Dendritic cell treated with granulocyte-macrophage colony-stimulating factor and Interleukin-4, amounts not matched to agents 40 ng/mL and 50 ng/mL, for 4 days (primary cell): ENCODE measurements at regions of chr13 and their contacts with region 1.

Region 1: DNA sequence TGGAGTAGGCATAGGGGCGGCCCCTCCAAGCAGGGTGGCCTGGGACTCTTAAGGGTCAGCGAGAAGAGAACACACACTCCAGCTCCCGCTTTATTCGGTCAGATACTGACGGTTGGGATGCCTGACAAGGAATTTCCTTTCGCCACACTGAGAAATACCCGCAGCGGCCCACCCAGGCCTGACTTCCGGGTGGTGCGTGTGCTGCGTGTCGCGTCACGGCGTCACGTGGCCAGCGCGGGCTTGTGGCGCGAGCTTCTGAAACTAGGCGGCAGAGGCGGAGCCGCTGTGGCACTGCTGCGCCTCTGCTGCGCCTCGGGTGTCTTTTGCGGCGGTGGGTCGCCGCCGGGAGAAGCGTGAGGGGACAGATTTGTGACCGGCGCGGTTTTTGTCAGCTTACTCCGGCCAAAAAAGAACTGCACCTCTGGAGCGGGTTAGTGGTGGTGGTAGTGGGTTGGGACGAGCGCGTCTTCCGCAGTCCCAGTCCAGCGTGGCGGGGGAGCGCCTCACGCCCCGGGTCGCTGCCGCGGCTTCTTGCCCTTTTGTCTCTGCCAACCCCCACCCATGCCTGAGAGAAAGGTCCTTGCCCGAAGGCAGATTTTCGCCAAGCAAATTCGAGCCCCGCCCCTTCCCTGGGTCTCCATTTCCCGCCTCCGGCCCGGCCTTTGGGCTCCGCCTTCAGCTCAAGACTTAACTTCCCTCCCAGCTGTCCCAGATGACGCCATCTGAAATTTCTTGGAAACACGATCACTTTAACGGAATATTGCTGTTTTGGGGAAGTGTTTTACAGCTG is at the starts of genes BRCA2 and ZAR1L:
- H3K4me3 Mint-ChIP-seq: peak within 1 kb of the TSS; percentile 95
- H3K27ac Mint-ChIP-seq: peak within 1 kb of the TSS; percentile 100
- H3K4me1 Mint-ChIP-seq: peaks cover 19% of the 10 kb centered on the region
- H3K27me3 Mint-ChIP-seq: no peaks in the 10 kb centered on the region

Region 2: DNA sequence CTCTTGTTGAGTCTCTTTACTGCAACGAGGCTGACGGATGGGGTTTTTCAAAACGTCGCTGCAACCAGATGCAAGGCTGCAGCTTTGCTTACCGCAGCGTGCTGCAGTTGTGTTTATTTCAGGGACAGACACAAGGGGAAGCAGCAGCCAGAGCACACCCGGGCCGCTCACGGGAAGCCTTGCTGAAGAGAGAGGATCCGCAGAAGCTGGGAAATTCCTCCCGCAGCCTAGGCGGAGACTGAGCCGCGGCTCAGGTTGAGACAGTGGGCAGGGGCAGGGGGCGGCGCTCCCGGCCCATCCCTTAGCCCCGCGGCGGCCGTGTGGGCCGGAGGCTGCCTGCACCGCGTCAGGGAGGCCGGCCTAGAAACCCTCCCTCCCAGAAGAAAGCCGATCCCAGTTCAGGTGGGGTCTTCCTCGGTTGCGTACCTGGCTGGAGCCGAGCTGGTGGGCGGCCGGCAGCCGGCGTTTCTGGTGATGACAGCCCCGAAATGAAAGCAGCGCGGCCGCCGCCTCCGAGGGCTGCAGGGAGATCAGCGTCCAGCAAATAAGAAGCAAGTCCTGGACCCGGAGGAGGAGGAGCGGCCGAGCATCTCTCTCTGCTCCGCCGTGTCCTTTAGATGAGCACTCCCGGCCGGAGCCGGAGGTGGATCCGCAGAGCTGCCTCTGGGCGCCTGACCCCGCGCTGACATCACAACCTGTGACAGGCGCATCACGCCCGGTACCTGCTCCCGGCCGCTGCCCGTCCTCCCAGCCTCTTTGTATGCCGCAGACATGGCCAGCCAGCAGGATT is 284.2 kb before region 1 on chr13 and contains the start of gene FRY:
- intact Hi-C with region 1: loop called (anchors 10 kb)
- H3K4me3 Mint-ChIP-seq: peak within 1 kb of the TSS; percentile 96
- H3K27ac Mint-ChIP-seq: peak within 1 kb of the TSS; percentile 91
- H3K4me1 Mint-ChIP-seq: peaks cover 40% of the 10 kb centered on the region
- H3K27me3 Mint-ChIP-seq: no peaks in the 10 kb centered on the region

Region 3: GRCh38 chr13:32135655-32136054 is 179.8 kb before region 1 on chr13:
- intact Hi-C with region 1: no loop called
- H3K4me3 Mint-ChIP-seq: no peak overlapping the region
- H3K27ac Mint-ChIP-seq: no peak overlapping the region
- H3K4me1 Mint-ChIP-seq: no peaks in the 10 kb centered on the region
- H3K27me3 Mint-ChIP-seq: no peaks in the 10 kb centered on the region

Region 4: GRCh38 chr13:32340914-32341313 is 25.5 kb after region 1 on chr13:
- intact Hi-C with region 1: loop called (anchors 2 kb)
- H3K4me3 Mint-ChIP-seq: peak overlapping the region; percentile 32
- H3K27ac Mint-ChIP-seq: peak overlapping the region; percentile 74
- H3K4me1 Mint-ChIP-seq: peaks cover 6% of the 10 kb centered on the region
- H3K27me3 Mint-ChIP-seq: no peaks in the 10 kb centered on the region

Region 5: DNA sequence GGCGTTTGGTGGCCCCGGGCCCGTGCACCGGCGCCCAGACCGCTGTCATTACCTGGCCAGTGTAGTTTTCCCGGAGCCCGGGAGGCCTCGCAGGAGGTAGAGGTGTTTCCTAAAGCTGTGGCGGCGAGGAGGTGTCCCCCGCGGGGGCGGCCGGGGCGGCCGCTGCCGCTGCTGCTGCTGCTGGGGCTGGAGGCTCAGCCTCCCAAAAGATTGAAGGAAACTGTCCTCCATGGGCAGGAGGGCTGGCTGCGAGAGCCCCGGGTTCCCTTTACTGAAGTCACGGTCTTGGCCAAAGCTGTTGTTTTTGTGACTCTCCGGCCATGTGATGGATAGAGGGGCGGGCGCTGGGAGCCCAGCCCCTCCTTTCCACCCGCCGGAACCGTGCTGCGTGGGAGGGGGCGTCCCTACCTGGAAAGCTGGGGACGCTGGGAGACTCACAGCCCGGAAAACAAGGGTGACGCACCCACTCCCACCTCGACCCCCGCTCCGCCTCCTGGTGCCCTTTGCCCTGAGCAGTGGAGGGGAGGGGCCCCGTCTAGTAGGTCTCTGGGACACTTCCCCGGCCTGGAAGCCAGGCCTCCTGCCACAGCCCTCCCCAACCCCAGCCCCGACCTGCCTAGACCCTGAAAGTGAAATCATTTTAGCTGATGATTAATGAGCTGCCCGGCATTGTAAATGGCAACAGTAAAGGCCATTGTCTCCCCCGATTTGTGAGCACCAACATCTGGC is 112.6 kb after region 1 on chr13 and contains the start of gene N4BP2L1:
- intact Hi-C with region 1: loop called (anchors 1 kb)
- H3K4me3 Mint-ChIP-seq: peak within 1 kb of the TSS; percentile 91
- H3K27ac Mint-ChIP-seq: peak within 1 kb of the TSS; percentile 100
- H3K4me1 Mint-ChIP-seq: peaks cover 64% of the 10 kb centered on the region
- H3K27me3 Mint-ChIP-seq: no peaks in the 10 kb centered on the region

Region 6: GRCh38 chr13:32538621-32539246 is 223.3 kb after region 1 on chr13 and contains the start of gene N4BP2L2:
- intact Hi-C with region 1: loop called (anchors 2 kb)
- H3K4me3 Mint-ChIP-seq: peak within 1 kb of the TSS; percentile 94
- H3K27ac Mint-ChIP-seq: peak within 1 kb of the TSS; percentile 98
- H3K4me1 Mint-ChIP-seq: peaks cover 40% of the 10 kb centered on the region
- H3K27me3 Mint-ChIP-seq: no peaks in the 10 kb centered on the region

Region 7: DNA sequence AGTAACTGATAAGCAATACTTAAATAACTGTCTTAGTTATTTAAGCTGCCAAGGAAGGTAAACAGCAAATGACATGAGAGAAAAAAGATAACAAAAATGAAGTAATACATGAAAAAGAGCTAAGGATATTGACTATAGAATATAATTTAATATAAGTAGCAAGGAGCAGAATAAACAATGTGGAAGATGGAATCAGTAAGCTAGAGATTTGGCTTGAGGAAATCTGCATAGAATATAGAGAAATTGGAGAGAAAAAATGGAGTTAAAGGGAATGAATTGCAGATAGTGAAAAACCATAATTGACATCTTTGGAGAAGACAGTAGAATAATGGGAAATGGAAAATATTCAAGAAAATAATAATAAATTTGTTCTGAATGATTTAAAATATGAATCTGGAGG is 398.0 kb after region 1 on chr13:
- intact Hi-C with region 1: no loop called
- H3K4me3 Mint-ChIP-seq: no peak overlapping the region
- H3K27ac Mint-ChIP-seq: no peak overlapping the region
- H3K4me1 Mint-ChIP-seq: no peaks in the 10 kb centered on the region
- H3K27me3 Mint-ChIP-seq: no peaks in the 10 kb centered on the region